Colonic mucosa (tissue), 4 donors: ENCODE measurements at regions of chr2 and their contacts with region 1.

Region 1: DNA sequence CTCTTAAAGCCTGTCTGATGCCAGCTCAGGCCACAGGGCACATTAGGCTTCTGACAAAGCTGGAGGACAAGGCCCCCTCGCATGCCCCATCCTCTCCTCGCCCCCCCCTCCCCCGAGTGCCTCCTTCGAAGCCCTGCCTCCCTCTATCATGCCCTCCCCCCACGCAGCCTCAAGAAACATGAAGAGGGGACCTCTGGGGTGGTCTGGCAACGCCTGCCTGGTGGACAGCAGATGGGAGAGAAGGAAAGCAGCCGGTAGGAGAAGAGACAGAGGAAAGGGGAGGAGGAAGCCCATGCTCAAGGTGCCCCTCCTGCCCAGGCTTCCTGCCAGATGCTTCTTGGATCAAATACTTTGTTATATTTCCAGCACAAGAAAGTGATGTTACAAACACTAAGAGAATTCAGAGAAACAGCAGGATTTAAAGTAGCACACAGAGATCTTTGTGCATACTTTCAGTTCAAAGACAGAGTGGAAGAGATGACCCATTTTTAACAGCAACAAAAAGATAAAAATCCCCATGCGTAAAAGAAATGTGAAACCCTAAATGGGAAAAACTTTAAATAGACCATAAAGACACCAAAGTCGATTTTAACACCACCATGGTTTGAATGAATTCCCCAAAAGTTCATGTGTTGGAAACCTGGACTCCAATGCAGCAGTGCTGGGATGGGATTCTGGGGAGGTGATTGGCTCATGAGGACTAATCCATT is 19.0 kb downstream of the BOK start:
- DNase-seq: no peak
- H3K4me3 ChIP-seq: no peak overlapping the region
- H3K27ac ChIP-seq: no peak overlapping the region
- H3K4me1 ChIP-seq: no peaks in the 10 kb centered on the region
- H3K27me3 ChIP-seq: no peaks in the 10 kb centered on the region
- CTCF ChIP-seq: no peak

Region 2: GRCh38 chr2:241637792-241638660 is 60.5 kb after region 1 on chr2:
- intact Hi-C with region 1: loop called (anchors 2 kb)
- DNase-seq: peak; percentile 25
- H3K4me3 ChIP-seq: peak overlapping the region; percentile 91
- H3K27ac ChIP-seq: peak overlapping the region; percentile 96
- H3K4me1 ChIP-seq: peaks cover 11% of the 10 kb centered on the region
- H3K27me3 ChIP-seq: no peaks in the 10 kb centered on the region
- CTCF ChIP-seq: no peak

Region 3: GRCh38 chr2:242002944-242003343 is 425.4 kb after region 1 on chr2:
- intact Hi-C with region 1: no loop called
- DNase-seq: no peak
- H3K4me3 ChIP-seq: no peak overlapping the region
- H3K27ac ChIP-seq: no peak overlapping the region
- H3K4me1 ChIP-seq: no peaks in the 10 kb centered on the region
- H3K27me3 ChIP-seq: no peaks in the 10 kb centered on the region
- CTCF ChIP-seq: no peak